Heart right ventricle (tissue), 16 donors: ENCODE measurements at regions of chr21 and their contacts with region 1.

Region 1: DNA sequence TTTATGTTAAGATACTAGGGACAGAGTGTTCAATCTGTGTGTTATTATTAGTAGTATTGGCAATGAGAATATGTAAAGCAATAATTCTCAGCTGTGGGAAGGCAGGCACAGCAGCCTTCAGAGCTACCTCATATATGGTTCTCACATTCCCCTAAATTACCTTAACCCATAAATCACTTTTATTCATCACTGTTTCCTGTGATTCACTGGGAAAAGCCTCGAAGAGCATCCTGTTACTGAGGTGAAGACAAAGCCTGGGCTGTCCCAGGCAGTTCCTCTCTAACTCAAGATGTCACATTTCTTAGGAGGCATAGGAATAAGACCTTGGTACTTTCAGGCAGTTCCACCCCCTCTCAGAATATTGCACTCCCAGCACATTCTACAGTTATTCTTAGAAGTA is 965.7 kb downstream of the NCAM2 start:
- DNase-seq: no peak
- ATAC-seq: no peak
- H3K4me3 ChIP-seq: no peak overlapping the region
- H3K27ac ChIP-seq: no peak overlapping the region
- H3K4me1 ChIP-seq: no peaks in the 10 kb centered on the region
- H3K27me3 ChIP-seq: no peaks in the 10 kb centered on the region
- CTCF ChIP-seq: no peak

Region 2: DNA sequence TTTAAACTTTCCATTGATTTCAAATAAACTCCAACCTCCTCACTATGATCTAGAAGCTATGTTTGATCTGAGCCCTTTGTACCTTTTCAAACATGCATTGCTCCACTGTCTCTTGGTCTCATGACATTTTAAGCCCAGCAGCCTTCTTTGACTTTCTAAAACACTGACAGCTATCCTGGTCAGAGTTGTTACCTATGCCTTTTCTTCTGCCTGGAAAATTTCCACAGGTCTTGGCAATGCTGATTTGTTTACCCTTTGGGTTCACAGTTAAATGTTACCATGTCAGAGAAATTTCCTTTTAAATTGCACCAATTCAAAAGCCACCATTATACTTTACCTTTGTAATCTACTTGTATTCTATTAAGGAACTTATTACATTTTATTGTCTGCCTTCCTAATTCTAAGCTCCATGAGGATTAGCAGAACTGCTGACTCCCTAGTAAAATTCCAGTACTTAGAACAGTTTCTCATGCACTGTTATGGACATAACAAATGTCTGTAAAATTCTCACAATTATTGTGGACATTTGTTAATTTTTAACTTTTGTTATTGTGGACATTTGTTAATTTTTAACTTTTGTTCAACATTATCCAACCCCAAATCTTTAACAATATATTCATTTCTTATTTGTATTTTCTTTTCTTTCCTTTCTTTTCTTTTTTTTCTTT is 98.7 kb after region 1 on chr21:
- intact Hi-C with region 1: loop called in 1 of 10 experiments (anchors 5 kb)
- DNase-seq: no peak
- ATAC-seq: no peak
- H3K4me3 ChIP-seq: no peak overlapping the region
- H3K27ac ChIP-seq: no peak overlapping the region
- H3K4me1 ChIP-seq: no peaks in the 10 kb centered on the region
- H3K27me3 ChIP-seq: no peaks in the 10 kb centered on the region
- CTCF ChIP-seq: no peak

Region 3: GRCh38 chr21:22297575-22297974 is 333.7 kb after region 1 on chr21:
- intact Hi-C with region 1: no loop called
- DNase-seq: no peak
- ATAC-seq: no peak
- H3K4me3 ChIP-seq: no peak overlapping the region
- H3K27ac ChIP-seq: no peak overlapping the region
- H3K4me1 ChIP-seq: no peaks in the 10 kb centered on the region
- H3K27me3 ChIP-seq: no peaks in the 10 kb centered on the region
- CTCF ChIP-seq: no peak